ENCODE measurements at regions of chr1 and their contacts with region 1.

Region 1: GRCh38 chr1:163410073-163410999 is 88.6 kb downstream of the NUF2 start:
- DNase-seq: peak; percentile 65
- H3K4me3 Mint-ChIP-seq: no peak overlapping the region
- H3K27ac Mint-ChIP-seq: no peak overlapping the region
- H3K4me1 Mint-ChIP-seq: peaks cover 8% of the 10 kb centered on the region
- H3K27me3 Mint-ChIP-seq: peaks cover 38% of the 10 kb centered on the region
- CTCF ChIP-seq: peak; percentile 80

Region 2: GRCh38 chr1:163321311-163322305 is 88.7 kb before region 1 on chr1 and contains the start of gene NUF2:
- CTCF ChIA-PET with region 1: no interaction called
- intact Hi-C with region 1: no loop called
- DNase-seq: peak; percentile 99
- H3K4me3 Mint-ChIP-seq: peak within 1 kb of the TSS; percentile 93
- H3K27ac Mint-ChIP-seq: peak within 1 kb of the TSS; percentile 97
- H3K4me1 Mint-ChIP-seq: peaks cover 30% of the 10 kb centered on the region
- H3K27me3 Mint-ChIP-seq: no peaks in the 10 kb centered on the region
- CTCF ChIP-seq: no peak
- total RNA-seq, gene NUF2: 25.3 and 33.1 TPM in 2 replicates

Region 3: DNA sequence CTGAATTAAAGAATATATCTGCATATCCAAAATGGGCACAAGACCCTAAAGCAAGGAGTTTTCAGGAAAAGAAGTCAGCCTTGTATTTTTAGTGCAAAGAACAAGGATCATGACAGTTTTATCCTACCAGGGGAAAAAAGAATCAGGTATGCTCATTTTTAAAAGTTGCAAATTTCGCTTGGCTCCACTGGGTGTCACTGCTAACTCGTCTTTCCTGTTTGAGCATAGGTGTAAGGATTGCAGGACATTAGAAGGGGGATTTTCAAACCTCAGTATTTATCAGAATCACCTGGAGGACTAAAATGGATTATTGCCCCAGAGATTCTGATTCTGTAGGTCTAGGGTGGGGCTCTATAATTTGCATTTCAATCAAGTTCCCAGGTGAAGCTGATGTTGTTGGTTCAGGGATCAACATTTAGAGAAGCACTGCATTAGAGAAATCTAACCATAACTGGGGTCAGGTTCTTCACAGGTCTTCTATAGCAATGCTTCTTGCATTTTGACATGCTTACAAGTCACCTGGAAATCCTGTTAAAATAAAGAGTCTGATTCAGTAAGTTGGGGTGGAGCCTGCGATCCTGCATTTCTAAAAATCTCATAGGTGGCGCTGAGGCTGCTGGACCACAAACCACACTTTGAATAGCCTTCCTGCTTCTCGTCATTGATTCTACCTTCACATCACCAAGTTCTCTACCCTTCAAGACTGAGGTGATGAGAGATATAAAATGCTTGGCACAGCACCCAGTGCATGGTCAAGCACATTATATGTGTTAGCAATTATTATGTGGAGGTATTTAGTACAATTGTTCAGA is 49.0 kb before region 1 on chr1:
- CTCF ChIA-PET with region 1: no interaction called
- intact Hi-C with region 1: loop called (anchors 2 kb)
- DNase-seq: peak; percentile 42
- H3K4me3 Mint-ChIP-seq: no peak overlapping the region
- H3K27ac Mint-ChIP-seq: no peak overlapping the region
- H3K4me1 Mint-ChIP-seq: no peaks in the 10 kb centered on the region
- H3K27me3 Mint-ChIP-seq: peaks cover 37% of the 10 kb centered on the region
- CTCF ChIP-seq: peak; percentile 57

Region 4: DNA sequence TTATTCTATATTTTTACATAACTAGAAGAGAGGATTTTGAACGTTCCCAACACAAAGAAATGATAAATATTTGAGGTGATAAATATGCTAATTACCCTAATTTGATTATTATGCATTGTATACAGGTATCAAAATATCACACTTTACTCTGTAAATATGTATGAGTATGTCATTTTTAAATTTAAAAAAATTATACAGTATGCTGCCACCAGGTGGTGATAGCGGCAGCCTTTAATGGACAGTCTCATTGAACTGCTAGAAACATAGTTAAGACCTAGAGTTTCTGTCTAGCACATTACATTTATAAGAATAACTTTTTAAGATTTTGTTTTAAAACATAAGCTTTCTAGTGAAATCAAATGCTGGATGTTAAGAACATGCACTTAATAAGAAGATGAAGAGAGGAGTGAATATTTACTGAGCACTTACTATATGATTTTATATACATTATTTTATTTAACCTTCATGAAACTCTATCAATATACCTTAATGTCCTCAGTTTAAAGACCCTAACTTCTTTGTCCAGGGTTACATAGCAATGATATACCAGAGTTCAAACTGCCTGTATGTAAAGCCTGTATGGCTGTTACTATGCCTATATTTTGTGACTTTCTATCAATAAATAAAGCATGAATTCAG is 118.5 kb after region 1 on chr1:
- CTCF ChIA-PET with region 1: no interaction called
- intact Hi-C with region 1: loop called (anchors 2 kb)
- DNase-seq: peak; percentile 48
- H3K4me3 Mint-ChIP-seq: no peak overlapping the region
- H3K27ac Mint-ChIP-seq: no peak overlapping the region
- H3K4me1 Mint-ChIP-seq: no peaks in the 10 kb centered on the region
- H3K27me3 Mint-ChIP-seq: peaks cover 17% of the 10 kb centered on the region
- CTCF ChIP-seq: no peak

Region 5: DNA sequence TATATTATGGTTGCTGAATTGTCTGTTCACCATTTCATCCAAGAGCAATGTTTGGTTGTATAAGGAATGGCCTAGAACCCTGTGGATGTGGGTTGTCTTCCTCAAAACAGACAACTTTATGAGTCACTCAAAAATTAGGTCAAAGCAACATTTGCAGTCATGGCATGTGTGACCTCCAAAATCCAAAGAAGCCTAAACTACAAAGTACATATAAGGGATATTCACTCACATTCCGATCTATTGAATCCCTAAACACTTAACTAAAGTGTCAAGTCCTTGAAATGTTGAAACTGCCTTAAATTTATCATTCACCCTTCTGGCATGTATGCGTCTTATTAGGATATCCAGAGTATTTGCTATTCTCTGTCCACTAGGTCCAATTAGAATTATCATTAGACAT is 402.9 kb after region 1 on chr1:
- CTCF ChIA-PET with region 1: no interaction called
- intact Hi-C with region 1: loop called (anchors 10 kb)
- DNase-seq: no peak
- H3K4me3 Mint-ChIP-seq: no peak overlapping the region
- H3K27ac Mint-ChIP-seq: no peak overlapping the region
- H3K4me1 Mint-ChIP-seq: no peaks in the 10 kb centered on the region
- H3K27me3 Mint-ChIP-seq: no peaks in the 10 kb centered on the region
- CTCF ChIP-seq: no peak

Measured in Calu3 (cell line).